Activated CD4-positive, alpha-beta memory T cell treated with anti-CD3 and anti-CD28 coated beads for 36 hours (primary cell): ENCODE measurements at regions of chr17 and their contacts with region 1.

Region 1: DNA sequence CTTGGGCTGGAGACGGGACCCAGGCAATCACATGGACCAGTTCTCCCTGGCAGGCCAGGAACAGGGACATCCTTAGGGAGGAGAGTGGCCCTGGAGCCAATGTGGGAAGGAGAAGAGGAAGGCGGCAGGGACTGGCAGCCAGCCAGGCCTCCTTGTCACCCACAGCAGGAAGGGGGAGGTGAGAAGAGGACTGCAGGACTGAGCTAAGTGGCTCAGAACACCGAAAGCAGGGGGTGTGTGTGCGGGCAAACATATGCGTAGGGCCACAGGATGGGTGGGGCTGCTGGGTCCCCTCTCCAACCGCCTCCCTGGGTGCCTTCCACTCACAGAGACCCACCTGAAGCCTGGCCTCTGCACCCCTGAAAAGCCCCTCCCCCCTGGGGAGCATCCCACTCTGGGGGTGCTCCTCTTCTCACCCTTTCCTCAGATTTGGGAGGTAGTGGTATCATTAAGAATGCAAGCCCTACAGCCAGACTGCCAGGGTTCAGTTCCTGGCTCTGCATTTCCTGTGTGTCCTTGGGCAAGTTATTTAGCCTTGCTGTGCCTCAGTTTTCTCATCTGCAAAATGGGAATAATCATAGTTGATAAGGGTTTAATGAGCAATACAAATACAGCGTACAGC is 8.1 kb downstream of the PNMT start:
- DNase-seq: peak; percentile 67
- H3K4me3 Mint-ChIP-seq: no peak overlapping the region
- H3K27ac Mint-ChIP-seq: peak overlapping the region; percentile 19
- H3K4me1 Mint-ChIP-seq: peaks cover 61% of the 10 kb centered on the region
- H3K27me3 Mint-ChIP-seq: peaks cover 2% of the 10 kb centered on the region

Region 2: DNA sequence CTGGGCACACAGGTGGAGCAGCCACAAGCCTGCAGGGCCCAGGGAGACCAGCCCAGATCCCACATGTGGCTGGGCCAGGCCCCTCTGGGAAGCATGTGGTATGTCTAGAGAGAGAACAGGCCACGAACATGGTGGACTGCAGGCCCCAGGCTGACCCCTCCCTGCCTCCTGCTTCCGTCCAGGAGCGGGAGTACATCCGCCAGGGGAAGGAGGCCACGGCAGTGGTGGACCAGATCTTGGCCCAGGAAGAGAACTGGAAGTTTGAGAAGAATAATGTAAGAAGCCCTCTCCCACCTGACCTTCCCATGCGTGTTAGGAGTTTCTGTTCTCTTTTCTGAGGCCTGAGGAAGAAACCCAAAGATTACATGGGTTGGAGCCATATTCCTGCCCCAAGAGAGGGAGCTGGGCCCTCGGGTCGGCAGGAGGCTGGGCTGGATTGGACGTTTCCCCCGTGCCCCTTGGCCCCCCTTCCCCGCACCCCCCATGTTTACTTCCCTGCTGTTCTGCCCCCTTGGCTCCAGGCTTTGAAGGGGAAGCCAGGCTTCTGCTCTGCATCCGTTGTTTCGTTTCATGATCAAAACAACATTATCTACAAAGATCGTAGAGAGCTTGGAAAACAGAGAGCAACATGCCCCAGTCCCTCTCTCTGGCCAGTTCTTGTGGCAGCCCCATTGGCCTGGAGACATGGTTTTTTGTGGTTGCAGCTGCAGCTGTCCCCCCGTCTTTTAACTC is 16.9 kb before region 1 on chr17:
- CTCF ChIA-PET with region 1: interaction called, 19 read pairs
- POLR2A ChIA-PET with region 1: interaction called, 3 read pairs
- intact Hi-C with region 1: loop called (anchors 2 kb)
- DNase-seq: no peak
- H3K4me3 Mint-ChIP-seq: no peak overlapping the region
- H3K27ac Mint-ChIP-seq: no peak overlapping the region
- H3K4me1 Mint-ChIP-seq: no peaks in the 10 kb centered on the region
- H3K27me3 Mint-ChIP-seq: no peaks in the 10 kb centered on the region

Region 3: GRCh38 chr17:39813631-39814030 is 137.3 kb after region 1 on chr17:
- CTCF ChIA-PET with region 1: no interaction called
- POLR2A ChIA-PET with region 1: no interaction called
- intact Hi-C with region 1: no loop called
- DNase-seq: peak; percentile 64
- H3K4me3 Mint-ChIP-seq: peak overlapping the region; percentile 70
- H3K27ac Mint-ChIP-seq: peak overlapping the region; percentile 89
- H3K4me1 Mint-ChIP-seq: peaks cover 70% of the 10 kb centered on the region
- H3K27me3 Mint-ChIP-seq: no peaks in the 10 kb centered on the region